ENCODE measurements at regions of chr18 and their contacts with region 1.

Region 1: GRCh38 chr18:26215247-26215970 is 10.8 kb upstream of the TAF4B start:
- DNase-seq: peak; percentile 69
- H3K4me3 Mint-ChIP-seq: peak overlapping the region; percentile 56
- H3K27ac Mint-ChIP-seq: peak overlapping the region; percentile 83
- H3K4me1 Mint-ChIP-seq: peaks cover 21% of the 10 kb centered on the region
- H3K27me3 Mint-ChIP-seq: no peaks in the 10 kb centered on the region

Region 2: DNA sequence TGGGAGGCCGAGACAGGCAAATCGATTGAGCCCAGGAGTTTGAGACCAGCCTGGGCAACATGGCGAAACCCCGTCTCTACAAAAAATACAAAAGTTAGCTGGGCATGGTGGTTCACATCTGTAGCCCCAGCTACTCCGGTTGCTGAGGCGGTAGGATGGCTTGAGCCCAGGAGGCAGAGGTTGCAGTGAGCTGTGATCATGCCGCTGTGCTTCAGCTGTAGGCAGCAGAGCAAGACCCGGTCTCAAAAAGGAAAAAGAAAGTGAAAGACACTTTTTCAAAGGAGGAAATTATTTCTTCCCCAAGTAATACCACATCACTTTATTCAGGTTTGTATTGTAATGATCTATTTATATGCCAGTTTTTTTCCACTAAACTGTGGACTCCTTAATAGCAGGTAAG is 24.9 kb before region 1 on chr18:
- CTCF ChIA-PET with region 1: interaction called, 4 read pairs
- POLR2A ChIA-PET with region 1: no interaction called
- intact Hi-C with region 1: loop called (anchors 2 kb)
- DNase-seq: peak; percentile 49
- H3K4me3 Mint-ChIP-seq: peak overlapping the region; percentile 73
- H3K27ac Mint-ChIP-seq: peak overlapping the region; percentile 65
- H3K4me1 Mint-ChIP-seq: peaks cover 15% of the 10 kb centered on the region
- H3K27me3 Mint-ChIP-seq: no peaks in the 10 kb centered on the region